ENCODE measurements at regions of chr14 and their contacts with region 1.

Region 1: DNA sequence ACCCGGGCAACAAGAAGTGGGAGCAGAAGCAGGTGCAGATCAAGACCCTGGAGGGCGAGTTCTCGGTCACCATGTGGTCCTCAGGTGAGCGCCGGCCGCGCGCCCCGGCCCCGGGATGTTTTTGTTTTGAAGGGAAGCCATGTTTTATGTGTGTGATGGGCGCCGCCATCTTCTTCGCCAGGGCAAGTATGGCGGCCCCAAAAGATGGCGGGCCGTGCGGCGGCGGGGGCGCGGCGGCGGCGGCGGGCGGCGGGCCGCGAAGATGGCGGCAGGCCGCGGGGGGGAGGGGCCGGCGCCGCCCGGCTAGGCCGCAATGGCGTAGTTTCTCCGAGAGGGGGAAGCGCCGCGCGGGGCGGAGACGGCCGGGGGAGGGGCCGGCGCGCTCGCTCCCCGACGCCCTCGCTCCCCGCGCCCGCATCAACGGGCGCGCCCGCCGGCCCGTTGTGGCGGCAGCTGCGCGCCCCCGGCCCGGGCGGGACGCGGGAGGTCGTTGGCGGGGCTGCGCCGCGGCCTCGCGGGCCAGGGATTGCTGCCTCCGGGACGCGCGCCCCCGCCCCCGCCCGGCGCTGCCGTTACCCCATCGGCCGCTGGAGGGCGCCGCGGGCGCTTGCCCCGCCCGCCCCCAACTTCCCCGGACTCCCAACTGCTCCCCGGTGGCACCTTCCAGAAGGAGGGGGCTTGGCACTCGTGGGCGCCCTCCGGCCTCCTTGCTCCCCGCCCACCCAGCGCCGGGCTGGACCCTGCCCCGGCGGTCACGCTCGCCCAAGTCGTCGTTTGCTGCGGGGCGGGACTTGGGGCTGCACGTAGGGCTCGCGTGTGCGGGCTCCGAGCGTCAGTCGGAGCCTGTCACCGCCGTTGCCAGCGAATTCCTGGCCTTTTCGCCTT is 1.1 kb downstream of the YY1 start:
- H3K4me3 ChIP-seq: peak overlapping the region; percentile 100
- H3K27ac ChIP-seq: peak overlapping the region; percentile 98
- H3K4me1 ChIP-seq: peaks cover 6% of the 10 kb centered on the region; the same call in 1 of the 2 replicates
- CTCF ChIP-seq: peak; percentile 59

Region 2: DNA sequence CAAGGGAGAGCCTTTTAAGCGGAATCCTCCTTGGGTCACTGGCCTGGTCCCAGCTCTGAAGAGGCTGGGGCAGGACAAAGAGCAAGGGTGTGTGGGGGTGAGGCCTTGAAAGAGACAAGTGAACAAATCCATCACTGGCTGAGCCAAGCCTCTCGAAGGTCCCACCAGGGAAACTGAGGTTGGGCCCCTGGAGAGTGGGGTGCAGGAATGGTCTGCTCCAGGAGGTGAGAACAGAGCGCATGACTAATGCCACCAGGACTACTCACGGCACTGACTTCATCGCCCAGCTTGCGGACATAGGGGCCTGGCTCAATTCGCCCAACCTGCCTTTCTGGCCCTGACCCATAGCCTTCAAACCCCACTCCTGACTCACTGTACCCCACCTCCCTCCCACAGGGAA is 61.4 kb before region 1 on chr14:
- CTCF ChIA-PET with region 1: no interaction called
- POLR2A ChIA-PET with region 1: no interaction called
- H3K4me3 ChIP-seq: no peak overlapping the region
- H3K27ac ChIP-seq: no peak overlapping the region
- H3K4me1 ChIP-seq: no peaks in the 10 kb centered on the region
- CTCF ChIP-seq: no peak

Region 3: DNA sequence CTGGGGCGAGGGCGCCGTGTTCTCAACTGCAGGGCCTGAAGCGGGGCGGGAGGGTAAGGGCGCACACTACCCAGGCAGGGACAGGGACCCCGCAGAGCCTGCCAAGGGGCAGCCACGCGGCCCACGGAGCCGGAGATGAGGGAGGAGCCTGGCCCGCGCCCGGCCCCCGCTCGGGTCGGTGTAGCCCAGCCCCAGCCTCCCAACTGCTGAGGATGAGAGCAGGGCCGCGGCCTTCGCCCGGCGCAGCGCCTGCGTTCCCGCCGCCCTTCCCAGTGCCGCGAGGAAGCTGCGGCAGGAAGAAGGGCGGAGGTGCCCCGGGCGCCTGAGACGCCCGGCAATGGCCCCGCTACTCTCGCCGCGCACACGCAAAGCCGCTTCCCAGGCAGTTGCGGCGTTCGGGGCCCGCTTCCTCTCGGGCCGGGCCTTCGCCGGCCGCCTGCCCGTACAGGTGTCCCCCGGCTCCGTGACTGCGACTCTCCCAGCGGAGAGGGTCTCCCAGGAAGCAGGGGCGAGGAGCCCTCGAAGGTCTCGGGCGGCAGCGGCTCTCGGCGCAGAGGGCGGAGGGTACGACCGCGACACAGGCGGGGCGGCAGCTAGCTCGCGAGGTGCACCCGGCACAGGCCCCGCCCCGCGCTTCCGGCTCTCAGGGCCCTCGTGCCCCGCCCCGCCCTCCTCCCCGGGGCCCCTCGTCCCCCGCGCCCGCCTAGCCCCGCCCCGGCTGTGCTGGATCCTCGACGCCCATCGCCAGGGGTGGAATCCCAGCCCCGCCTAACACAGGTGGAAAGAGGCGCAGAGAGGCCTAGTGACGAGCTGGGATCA is 25.9 kb before region 1 on chr14:
- CTCF ChIA-PET with region 1: interaction called, 3 read pairs
- POLR2A ChIA-PET with region 1: interaction called, 30 read pairs
- H3K4me3 ChIP-seq: peak overlapping the region; percentile 74
- H3K27ac ChIP-seq: peak overlapping the region; percentile 89
- H3K4me1 ChIP-seq: peaks cover 4% of the 10 kb centered on the region; the same call in 1 of the 2 replicates
- CTCF ChIP-seq: no peak